Gastrocnemius medialis (tissue), 4 donors: ENCODE measurements at regions of chrX and their contacts with region 1.

Region 1: GRCh38 chrX:18899796-18900447 is 84.0 kb downstream of the PHKA2 start:
- DNase-seq: no peak
- ATAC-seq: no peak
- H3K4me3 ChIP-seq: no peak overlapping the region
- H3K27ac ChIP-seq: peak overlapping the region in 2 of 4 donors; percentile 27 to 68
- H3K4me1 ChIP-seq: peaks cover 2 to 4% of the 10 kb centered on the region in 2 donors
- H3K27me3 ChIP-seq: no peaks in the 10 kb centered on the region
- CTCF ChIP-seq: peak in 2 of 5 experiments; percentile 23 to 29
- POLR2A ChIP-seq: no peak

Region 2: GRCh38 chrX:18390941-18391538 is 508.9 kb before region 1 on chrX:
- in situ Hi-C with region 1: loop called (anchors 5 to 25 kb)
- intact Hi-C with region 1: loop called (anchors 1 kb)
- DNase-seq: peak; percentile 11 to 34
- ATAC-seq: peak; percentile 36 to 45
- H3K4me3 ChIP-seq: no peak overlapping the region
- H3K27ac ChIP-seq: no peak overlapping the region
- H3K4me1 ChIP-seq: no peaks in the 10 kb centered on the region
- H3K27me3 ChIP-seq: no peaks in the 10 kb centered on the region
- CTCF ChIP-seq: peak; percentile 43 to 83 (median 70)
- POLR2A ChIP-seq: no peak

Region 3: DNA sequence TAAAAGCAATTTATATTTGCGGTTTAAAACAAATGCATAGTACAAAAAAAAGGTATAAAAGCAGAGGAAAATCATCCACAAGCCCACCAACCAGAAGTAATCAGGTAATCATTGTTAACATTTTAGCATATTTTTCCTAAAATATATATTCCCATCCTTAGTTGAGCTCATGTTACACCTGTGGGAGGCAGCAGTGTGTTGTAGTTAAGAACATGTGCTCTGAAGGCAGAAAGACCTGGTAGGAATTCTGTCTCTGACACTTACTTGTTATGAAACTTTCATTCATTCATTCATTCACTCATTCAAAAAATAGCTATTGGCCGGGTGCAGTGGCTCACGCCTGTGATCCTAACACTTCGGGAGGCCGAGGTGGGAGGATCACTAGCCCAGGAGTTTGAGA is 489.9 kb before region 1 on chrX:
- in situ Hi-C with region 1: no loop called
- intact Hi-C with region 1: loop called (anchors 5 kb)
- DNase-seq: no peak
- ATAC-seq: no peak
- H3K4me3 ChIP-seq: no peak overlapping the region
- H3K27ac ChIP-seq: no peak overlapping the region
- H3K4me1 ChIP-seq: no peaks in the 10 kb centered on the region
- H3K27me3 ChIP-seq: no peaks in the 10 kb centered on the region
- CTCF ChIP-seq: no peak
- POLR2A ChIP-seq: no peak

Region 4: GRCh38 chrX:18425199-18426003 is 474.5 kb before region 1 on chrX and contains the start of gene CDKL5:
- in situ Hi-C with region 1: no loop called
- intact Hi-C with region 1: loop called (anchors 2 kb)
- DNase-seq: peak; percentile 95 to 96
- ATAC-seq: peak; percentile 99
- H3K4me3 ChIP-seq: peak within 1 kb of the TSS; percentile 71 to 93 (median 80)
- H3K27ac ChIP-seq: peak within 1 kb of the TSS; percentile 82 to 86 (median 84)
- H3K4me1 ChIP-seq: peaks cover 0 to 4% of the 10 kb centered on the region in 2 donors
- H3K27me3 ChIP-seq: no peaks in the 10 kb centered on the region
- CTCF ChIP-seq: no peak
- POLR2A ChIP-seq: peak; percentile 72 to 88
- total RNA-seq, gene CDKL5: 1.5 to 3.0 (median 2.8) TPM

Region 5: DNA sequence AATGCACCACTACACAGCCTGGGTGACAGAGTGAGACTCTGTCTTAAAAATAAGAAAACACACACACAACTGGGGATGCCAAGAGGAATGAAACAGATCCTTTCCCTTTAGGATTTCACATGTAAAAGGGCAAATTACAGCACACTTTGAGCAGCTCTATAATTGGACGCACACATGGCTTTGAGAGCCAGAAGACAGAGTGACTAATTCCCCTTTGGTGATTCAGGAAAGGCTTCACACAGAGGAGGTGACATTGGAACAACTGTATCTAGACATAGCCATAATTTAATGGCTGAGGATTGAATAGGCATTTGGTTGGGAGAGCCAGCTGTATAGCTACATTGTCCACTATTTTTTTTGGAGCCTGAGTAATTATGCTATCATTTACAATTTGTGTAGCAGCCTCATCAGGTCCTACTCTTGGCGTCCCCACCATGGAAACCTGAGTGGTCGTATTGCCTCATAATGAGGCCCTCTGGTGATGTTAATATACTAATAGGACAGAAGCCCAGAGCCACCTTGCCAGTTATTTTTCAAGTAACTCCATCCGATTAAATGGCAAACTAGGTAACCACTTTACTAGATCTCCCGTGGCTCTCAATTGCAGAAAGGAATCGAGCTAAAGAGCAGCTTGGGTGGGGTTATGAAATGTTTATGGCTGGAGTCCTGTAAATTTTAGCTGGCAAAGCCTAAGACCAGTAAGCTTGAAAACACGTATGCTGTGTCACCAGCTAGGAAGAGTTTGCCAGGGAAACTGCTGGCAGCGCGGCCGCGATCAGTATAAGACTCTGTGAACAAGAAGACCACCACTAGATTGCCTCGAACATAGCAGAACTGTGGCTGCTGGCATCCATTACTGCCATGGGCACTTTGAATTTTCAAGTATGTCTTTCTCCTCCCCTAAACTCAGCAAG is 200.9 kb before region 1 on chrX:
- in situ Hi-C with region 1: loop called in 3 of 4 experiments (anchors 25 kb)
- intact Hi-C with region 1: loop called (anchors 2 kb)
- DNase-seq: peak in 1 of 2 donors; percentile 22
- ATAC-seq: peak; percentile 89 to 92
- H3K4me3 ChIP-seq: no peak overlapping the region
- H3K27ac ChIP-seq: peak overlapping the region; percentile 60 to 75 (median 72)
- H3K4me1 ChIP-seq: no peaks in the 10 kb centered on the region
- H3K27me3 ChIP-seq: no peaks in the 10 kb centered on the region
- CTCF ChIP-seq: no peak
- POLR2A ChIP-seq: no peak

Region 6: DNA sequence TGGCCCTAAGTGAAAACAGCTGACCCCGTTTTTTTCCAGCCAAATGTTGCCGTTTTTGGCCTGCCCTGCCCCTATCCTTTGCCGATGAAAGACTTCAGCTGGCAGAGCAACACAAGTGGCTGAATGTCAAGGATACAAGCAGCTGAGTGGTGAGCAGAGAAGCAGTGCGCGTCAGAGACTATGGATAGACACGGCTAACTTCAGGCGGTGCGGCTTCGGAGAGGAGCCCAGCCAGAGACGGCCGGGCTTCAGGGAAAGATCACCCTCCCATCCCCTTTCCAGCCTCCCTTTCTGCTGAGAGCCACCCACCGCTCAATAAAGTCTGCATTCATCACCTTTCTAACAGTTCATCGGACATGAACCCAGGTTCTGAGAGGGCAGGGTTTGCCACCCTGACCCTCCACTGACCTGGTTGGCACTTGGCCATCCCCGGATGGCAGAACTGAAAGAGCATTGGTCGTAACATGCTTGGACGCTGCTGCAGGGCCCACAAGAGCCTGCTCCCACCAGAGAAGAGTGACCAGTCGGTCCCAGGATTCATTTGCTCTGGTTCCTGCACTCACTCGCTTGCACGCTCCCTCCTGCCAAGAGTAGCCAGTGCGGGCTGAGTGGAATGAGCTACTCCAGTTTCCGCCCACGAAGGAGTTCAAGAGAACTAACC is 66.7 kb before region 1 on chrX:
- in situ Hi-C with region 1: no loop called
- intact Hi-C with region 1: loop called (anchors 2 kb)
- DNase-seq: peak; percentile 64 to 82
- ATAC-seq: peak; percentile 98 to 99
- H3K4me3 ChIP-seq: peak overlapping the region; percentile 39 to 50 (median 47)
- H3K27ac ChIP-seq: peak overlapping the region; percentile 80 to 89 (median 86)
- H3K4me1 ChIP-seq: peaks cover 0 to 3% of the 10 kb centered on the region in 2 donors
- H3K27me3 ChIP-seq: no peaks in the 10 kb centered on the region
- CTCF ChIP-seq: no peak
- POLR2A ChIP-seq: peak; percentile 54 to 63

Region 7: DNA sequence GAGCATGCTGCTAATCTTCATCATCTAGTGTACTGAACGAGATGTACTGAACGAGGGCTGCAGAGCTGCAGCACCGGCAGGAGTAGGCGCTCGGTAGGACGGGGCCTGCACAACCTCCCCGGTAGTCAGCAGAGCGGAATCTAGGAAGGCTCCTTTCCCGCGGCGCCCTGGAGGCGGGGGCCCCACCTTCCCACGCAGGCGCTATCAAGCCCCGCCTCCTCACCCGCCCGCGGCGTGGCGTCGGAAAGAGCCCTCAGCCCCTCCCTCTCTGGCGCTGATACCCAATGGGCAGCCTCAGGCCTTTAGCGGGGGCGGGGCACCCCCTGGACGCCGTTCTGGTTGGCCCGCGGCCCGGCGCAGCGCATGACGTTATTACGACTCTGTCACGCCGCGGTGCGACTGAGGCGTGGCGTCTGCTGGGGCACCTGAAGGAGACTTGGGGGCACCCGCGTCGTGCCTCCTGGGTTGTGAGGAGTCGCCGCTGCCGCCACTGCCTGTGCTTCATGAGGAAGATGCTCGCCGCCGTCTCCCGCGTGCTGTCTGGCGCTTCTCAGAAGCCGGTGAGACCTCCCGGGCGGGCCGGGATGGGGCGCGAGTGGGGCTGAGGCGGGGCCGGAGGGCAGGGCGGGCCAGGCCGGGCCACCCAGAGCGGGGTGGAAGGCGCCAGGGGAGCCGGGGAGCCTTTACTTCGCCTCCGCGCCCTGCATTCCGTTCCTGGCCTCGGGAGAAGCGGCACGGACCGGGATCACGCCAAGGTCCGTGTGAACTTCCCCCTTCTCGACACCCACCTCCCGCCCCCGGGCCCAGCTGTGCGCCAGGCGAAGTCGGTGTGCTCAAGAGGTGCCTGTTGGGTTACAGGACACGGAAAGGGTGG is 443.9 kb after region 1 on chrX and contains the start of gene PDHA1:
- in situ Hi-C with region 1: loop called in 2 of 4 experiments (anchors 25 kb)
- intact Hi-C with region 1: no loop called
- DNase-seq: peak; percentile 85 to 93
- ATAC-seq: peak; percentile 88 to 92
- H3K4me3 ChIP-seq: peak within 1 kb of the TSS; percentile 57 to 79 (median 60)
- H3K27ac ChIP-seq: peak within 1 kb of the TSS; percentile 84 to 94 (median 93)
- H3K4me1 ChIP-seq: peaks cover 10 to 14% of the 10 kb centered on the region in 2 donors
- H3K27me3 ChIP-seq: no peaks in the 10 kb centered on the region
- CTCF ChIP-seq: no peak
- POLR2A ChIP-seq: peak; percentile 82 to 91
- total RNA-seq, gene PDHA1: 143 to 238 (median 203) TPM

Region 8: DNA sequence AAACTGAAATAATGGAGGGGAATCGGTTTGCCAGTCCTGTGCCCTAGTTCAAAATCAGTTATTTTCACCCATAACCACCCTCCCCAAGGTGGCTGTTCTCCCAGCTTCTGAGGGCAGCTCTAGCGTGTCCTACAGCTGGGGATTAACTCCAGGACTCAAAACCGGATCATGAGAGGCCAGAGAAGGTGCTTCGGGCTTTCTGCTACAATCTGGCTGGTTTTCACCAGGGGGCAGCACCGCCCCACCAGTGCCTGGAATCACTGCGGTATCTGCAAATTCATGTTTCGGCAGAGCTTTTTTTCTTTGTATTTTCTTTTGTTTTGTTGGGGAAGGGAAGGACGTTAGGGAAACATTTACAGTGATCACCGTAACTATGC is 472.2 kb after region 1 on chrX:
- in situ Hi-C with region 1: no loop called
- intact Hi-C with region 1: no loop called
- DNase-seq: peak in 1 of 2 donors; percentile 31
- ATAC-seq: peak in 1 of 2 donors; percentile 61
- H3K4me3 ChIP-seq: peak overlapping the region; percentile 36 to 47 (median 36)
- H3K27ac ChIP-seq: no peak overlapping the region
- H3K4me1 ChIP-seq: peaks cover 0 to 4% of the 10 kb centered on the region in 2 donors
- H3K27me3 ChIP-seq: peaks cover 0 to 7% (median 0%) of the 10 kb centered on the region in 3 donors
- CTCF ChIP-seq: peak in 4 of 5 experiments; percentile 24 to 64 (median 45)
- POLR2A ChIP-seq: no peak